Activated naive CD4-positive, alpha-beta T cell treated with anti-CD3 and anti-CD28 coated beads for 36 hours (primary cell): ENCODE measurements at regions of chr1 and their contacts with region 1.

Region 1: DNA sequence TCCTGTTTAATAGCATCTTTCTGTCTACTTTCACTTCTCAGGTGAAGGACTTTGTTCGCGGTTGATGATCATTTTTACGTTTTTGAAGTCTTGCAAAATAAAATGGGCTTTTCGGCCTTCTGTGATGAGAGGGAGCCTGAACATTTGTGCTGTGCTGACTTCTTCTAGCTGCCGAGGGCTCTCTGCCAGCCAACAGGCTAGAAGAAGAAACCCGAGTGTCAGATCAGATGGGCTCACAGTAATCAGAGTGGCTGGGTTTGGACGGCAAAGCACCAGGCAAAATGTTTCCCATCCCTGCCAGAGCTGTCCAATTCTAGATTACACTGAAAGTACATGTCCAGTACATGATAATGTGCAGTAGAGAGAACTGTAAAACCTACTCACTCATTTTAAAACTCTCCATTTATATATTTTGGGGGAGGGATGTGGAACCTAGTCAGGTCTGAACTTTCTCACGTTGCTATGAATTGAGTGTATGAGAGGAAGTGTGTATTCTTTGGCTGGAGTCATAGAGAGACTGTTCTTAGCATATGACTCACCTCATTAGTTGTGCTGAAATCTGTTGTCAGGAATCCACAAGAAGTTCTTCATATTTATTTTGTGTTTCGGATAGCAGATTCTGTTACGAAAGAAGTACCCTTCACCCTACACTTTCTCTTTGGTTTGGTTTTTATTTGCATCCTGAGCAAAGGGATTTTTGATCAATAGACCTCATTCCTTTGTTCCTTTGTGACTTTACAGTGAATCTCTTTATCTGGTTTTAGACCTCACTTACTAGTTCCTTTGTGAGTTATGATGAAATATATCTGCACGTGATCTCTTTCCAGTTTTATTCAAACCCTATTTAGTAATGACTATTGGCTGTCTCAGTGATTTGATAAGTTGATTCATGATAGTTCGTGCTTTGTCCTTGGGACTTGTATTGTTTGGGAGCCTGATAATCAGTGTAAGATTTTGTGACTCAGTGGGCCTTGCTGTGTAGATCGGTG is 4.8 kb downstream of the ATP1A1 start:
- DNase-seq: peak; percentile 47
- H3K4me3 Mint-ChIP-seq: peak overlapping the region; percentile 72
- H3K27ac Mint-ChIP-seq: peak overlapping the region; percentile 95
- H3K4me1 Mint-ChIP-seq: peaks cover 64% of the 10 kb centered on the region
- H3K27me3 Mint-ChIP-seq: no peaks in the 10 kb centered on the region

Region 2: GRCh38 chr1:116139592-116140134 is 238.2 kb before region 1 on chr1:
- CTCF ChIA-PET with region 1: interaction called, 18 read pairs
- intact Hi-C with region 1: loop called (anchors 1 kb)
- DNase-seq: no peak
- H3K4me3 Mint-ChIP-seq: no peak overlapping the region
- H3K27ac Mint-ChIP-seq: no peak overlapping the region
- H3K4me1 Mint-ChIP-seq: peaks cover 7% of the 10 kb centered on the region
- H3K27me3 Mint-ChIP-seq: no peaks in the 10 kb centered on the region

Region 3: GRCh38 chr1:116288201-116288761 is 89.6 kb before region 1 on chr1:
- CTCF ChIA-PET with region 1: no interaction called
- intact Hi-C with region 1: no loop called
- DNase-seq: no peak
- H3K4me3 Mint-ChIP-seq: no peak overlapping the region
- H3K27ac Mint-ChIP-seq: no peak overlapping the region
- H3K4me1 Mint-ChIP-seq: peaks cover 8% of the 10 kb centered on the region
- H3K27me3 Mint-ChIP-seq: no peaks in the 10 kb centered on the region

Region 4: GRCh38 chr1:116325922-116326321 is 51.9 kb before region 1 on chr1:
- CTCF ChIA-PET with region 1: interaction called, 3 read pairs
- intact Hi-C with region 1: loop called (anchors 1 kb)
- DNase-seq: peak; percentile 73
- H3K4me3 Mint-ChIP-seq: peak overlapping the region; percentile 19
- H3K27ac Mint-ChIP-seq: peak overlapping the region; percentile 95
- H3K4me1 Mint-ChIP-seq: peaks cover 79% of the 10 kb centered on the region
- H3K27me3 Mint-ChIP-seq: no peaks in the 10 kb centered on the region

Region 5: GRCh38 chr1:116457946-116458604 is 80.2 kb after region 1 on chr1:
- CTCF ChIA-PET with region 1: no interaction called
- intact Hi-C with region 1: no loop called
- DNase-seq: no peak
- H3K4me3 Mint-ChIP-seq: no peak overlapping the region
- H3K27ac Mint-ChIP-seq: no peak overlapping the region
- H3K4me1 Mint-ChIP-seq: no peaks in the 10 kb centered on the region
- H3K27me3 Mint-ChIP-seq: no peaks in the 10 kb centered on the region

Region 6: DNA sequence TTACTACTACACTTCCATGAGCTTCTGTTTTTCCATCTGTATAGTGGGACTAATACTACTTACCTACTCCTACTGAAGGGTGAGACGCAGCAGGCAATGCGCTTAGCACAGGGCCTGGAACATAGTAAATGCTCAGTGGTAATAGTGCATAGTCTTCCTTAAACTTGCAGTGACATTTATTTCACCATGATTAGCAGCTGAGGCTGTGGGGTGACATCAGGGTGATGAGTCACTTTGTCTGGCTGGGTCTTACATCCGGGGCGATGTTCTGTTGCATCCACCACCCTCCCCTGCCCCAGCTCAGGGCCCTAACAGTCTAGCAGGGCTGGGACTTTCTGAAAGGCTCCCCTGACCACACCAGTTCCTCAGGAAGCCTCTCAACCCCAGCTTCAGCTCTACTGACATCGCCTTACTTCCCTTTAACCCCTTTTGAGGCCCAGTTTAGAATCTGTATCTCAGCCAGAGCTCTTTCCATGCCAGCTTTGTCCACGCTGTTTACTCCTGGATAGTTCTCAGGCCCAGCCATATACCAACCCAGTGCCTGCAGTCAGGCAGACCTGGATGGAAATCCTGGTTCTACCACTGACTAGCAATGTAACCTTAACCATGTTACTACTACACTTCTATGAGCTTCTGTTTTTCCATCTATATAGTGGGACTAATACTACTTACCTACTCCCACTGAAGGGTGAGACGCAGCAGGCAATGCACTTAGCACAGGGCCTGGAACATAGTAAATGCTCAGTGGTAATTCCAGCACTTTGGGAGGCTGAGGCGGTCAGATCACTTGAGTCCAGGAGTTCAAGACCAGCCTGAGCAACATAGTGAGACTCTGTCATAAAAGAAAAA is 126.7 kb after region 1 on chr1:
- CTCF ChIA-PET with region 1: no interaction called
- intact Hi-C with region 1: loop called (anchors 1 kb)
- DNase-seq: peak; percentile 92
- H3K4me3 Mint-ChIP-seq: peak overlapping the region; percentile 1
- H3K27ac Mint-ChIP-seq: peak overlapping the region; percentile 82
- H3K4me1 Mint-ChIP-seq: peaks cover 53% of the 10 kb centered on the region
- H3K27me3 Mint-ChIP-seq: no peaks in the 10 kb centered on the region

Region 7: GRCh38 chr1:116763787-116764465 is 386.1 kb after region 1 on chr1:
- CTCF ChIA-PET with region 1: no interaction called
- intact Hi-C with region 1: loop called (anchors 1 kb)
- DNase-seq: peak; percentile 68
- H3K4me3 Mint-ChIP-seq: peak overlapping the region; percentile 100
- H3K27ac Mint-ChIP-seq: peak overlapping the region; percentile 100
- H3K4me1 Mint-ChIP-seq: peaks cover 87% of the 10 kb centered on the region
- H3K27me3 Mint-ChIP-seq: no peaks in the 10 kb centered on the region

Region 8: DNA sequence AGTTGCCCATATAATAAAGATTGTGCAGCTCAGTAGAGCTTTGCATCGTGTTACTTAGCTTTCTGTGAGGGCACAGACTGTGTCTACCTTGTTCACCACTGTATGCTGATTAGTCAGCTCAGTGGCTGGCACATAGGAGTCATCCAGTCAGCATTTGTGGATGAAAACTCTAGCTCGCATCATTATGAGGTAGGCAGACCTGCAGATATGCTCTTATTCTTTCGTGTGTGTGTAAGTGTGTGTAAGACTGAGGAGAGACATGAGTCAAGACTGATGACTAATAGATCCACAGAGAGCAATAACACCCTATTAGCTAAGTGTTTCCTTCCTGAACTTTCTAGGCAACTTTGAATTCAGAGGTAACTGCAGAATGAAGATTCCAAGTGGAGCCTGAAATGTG is 699.4 kb after region 1 on chr1:
- CTCF ChIA-PET with region 1: no interaction called
- intact Hi-C with region 1: loop called (anchors 5 kb)
- DNase-seq: peak; percentile 79
- H3K4me3 Mint-ChIP-seq: no peak overlapping the region
- H3K27ac Mint-ChIP-seq: peak overlapping the region; percentile 76
- H3K4me1 Mint-ChIP-seq: peaks cover 38% of the 10 kb centered on the region
- H3K27me3 Mint-ChIP-seq: no peaks in the 10 kb centered on the region

Region 9: GRCh38 chr1:117664314-117664713 is 1286.5 kb after region 1 on chr1:
- CTCF ChIA-PET with region 1: no interaction called
- intact Hi-C with region 1: loop called (anchors 1 kb)
- DNase-seq: peak; percentile 89
- H3K4me3 Mint-ChIP-seq: no peak overlapping the region
- H3K27ac Mint-ChIP-seq: peak overlapping the region; percentile 71
- H3K4me1 Mint-ChIP-seq: peaks cover 71% of the 10 kb centered on the region
- H3K27me3 Mint-ChIP-seq: peaks cover 6% of the 10 kb centered on the region